Activated CD4-positive, alpha-beta T cell treated with anti-CD3 and anti-CD28 coated beads for 36 hours (primary cell): ENCODE measurements at regions of chr16 and their contacts with region 1.

Region 1: DNA sequence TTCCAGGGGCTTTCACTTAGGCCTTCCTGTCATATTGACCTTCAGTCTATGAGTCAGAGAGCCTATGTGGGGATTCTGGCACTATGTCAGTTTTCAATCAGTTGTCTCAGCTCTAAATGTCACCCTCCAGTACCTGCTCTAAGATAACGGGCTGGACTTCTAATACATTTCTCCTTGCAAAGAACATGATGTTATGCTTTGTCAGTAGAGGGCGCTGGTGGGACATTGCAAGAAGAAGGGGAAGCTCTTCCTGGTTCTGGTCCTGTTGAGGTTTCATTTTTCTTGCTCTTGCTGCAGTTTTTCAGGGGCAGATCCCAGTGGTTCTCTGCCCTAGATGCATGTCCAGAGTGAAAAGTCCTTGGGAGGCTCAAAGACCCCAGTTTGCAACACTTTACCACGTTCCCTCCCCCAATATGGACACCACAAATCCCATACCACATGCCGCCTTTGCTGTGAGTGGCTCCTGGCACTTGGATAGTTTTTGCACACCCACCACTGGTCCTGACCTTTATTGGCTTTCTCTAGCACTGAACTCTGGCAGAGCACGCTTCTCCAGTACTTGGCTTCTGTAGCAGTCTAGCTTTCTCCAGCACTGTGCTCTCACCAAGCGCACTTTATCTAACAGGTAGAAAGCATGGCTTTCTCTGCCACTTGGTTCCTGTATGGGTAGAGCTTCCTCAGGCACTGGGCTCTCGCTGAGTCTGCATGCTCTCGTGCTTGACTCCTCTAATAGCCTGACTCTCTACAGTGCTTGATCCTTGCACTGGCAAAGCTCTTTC is 49.0 kb downstream of the BCL7C start:
- DNase-seq: peak; percentile 89
- ATAC-seq: peak; percentile 88
- H3K4me3 Mint-ChIP-seq: peak overlapping the region; percentile 45
- H3K27ac Mint-ChIP-seq: peak overlapping the region; percentile 58
- H3K4me1 Mint-ChIP-seq: peaks cover 8% of the 10 kb centered on the region
- H3K27me3 Mint-ChIP-seq: no peaks in the 10 kb centered on the region

Region 2: GRCh38 chr16:30378236-30379204 is 466.3 kb before region 1 on chr16:
- CTCF ChIA-PET with region 1: no interaction called
- POLR2A ChIA-PET with region 1: no interaction called
- intact Hi-C with region 1: no loop called
- DNase-seq: peak; percentile 100
- ATAC-seq: peak; percentile 87
- H3K4me3 Mint-ChIP-seq: peak overlapping the region; percentile 99
- H3K27ac Mint-ChIP-seq: peak overlapping the region; percentile 99
- H3K4me1 Mint-ChIP-seq: peaks cover 44% of the 10 kb centered on the region
- H3K27me3 Mint-ChIP-seq: no peaks in the 10 kb centered on the region

Region 3: GRCh38 chr16:30834130-30834740 is 10.6 kb before region 1 on chr16:
- CTCF ChIA-PET with region 1: interaction called, 14 read pairs
- POLR2A ChIA-PET with region 1: no interaction called
- intact Hi-C with region 1: no loop called
- DNase-seq: no peak
- ATAC-seq: no peak
- H3K4me3 Mint-ChIP-seq: no peak overlapping the region
- H3K27ac Mint-ChIP-seq: no peak overlapping the region
- H3K4me1 Mint-ChIP-seq: no peaks in the 10 kb centered on the region
- H3K27me3 Mint-ChIP-seq: no peaks in the 10 kb centered on the region

Region 4: GRCh38 chr16:30874821-30875717 is 30.2 kb after region 1 on chr16:
- CTCF ChIA-PET with region 1: interaction called, 12 read pairs
- POLR2A ChIA-PET with region 1: no interaction called
- intact Hi-C with region 1: loop called in 1 of 2 experiments (anchors 1 kb)
- DNase-seq: peak; percentile 94
- ATAC-seq: peak; percentile 82
- H3K4me3 Mint-ChIP-seq: peak overlapping the region; percentile 87
- H3K27ac Mint-ChIP-seq: peak overlapping the region; percentile 93
- H3K4me1 Mint-ChIP-seq: peaks cover 24% of the 10 kb centered on the region
- H3K27me3 Mint-ChIP-seq: no peaks in the 10 kb centered on the region

Region 5: DNA sequence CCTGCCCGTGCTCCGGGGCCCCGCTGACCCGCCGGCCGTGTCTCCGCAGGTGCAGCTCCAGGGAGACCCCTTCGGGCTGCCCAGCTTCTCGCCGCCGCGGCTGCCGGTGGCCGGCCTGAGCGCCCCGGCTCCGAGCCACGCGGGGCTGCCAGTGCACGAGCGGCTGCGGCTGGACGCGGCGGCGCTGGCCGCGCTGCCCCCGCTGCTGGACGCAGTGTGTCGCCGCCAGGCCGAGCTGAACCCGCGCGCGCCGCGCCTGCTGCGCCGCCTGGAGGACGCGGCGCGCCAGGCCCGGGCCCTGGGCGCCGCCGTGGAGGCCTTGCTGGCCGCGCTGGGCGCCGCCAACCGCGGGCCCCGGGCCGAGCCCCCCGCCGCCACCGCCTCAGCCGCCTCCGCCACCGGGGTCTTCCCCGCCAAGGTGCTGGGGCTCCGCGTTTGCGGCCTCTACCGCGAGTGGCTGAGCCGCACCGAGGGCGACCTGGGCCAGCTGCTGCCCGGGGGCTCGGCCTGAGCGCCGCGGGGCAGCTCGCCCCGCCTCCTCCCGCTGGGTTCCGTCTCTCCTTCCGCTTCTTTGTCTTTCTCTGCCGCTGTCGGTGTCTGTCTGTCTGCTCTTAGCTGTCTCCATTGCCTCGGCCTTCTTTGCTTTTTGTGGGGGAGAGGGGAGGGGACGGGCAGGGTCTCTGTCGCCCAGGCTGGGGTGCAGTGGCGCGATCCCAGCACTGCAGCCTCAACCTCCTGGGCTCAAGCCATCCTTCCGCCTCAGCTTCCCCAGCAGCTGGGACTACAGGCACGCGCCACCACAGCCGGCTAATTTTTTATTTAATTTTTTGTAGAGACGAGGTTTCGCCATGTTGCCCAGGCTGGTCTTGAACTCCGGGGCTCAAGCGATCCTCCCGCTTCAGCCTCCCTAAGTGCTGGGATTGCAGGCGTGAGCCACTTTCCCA is 57.4 kb after region 1 on chr16:
- CTCF ChIA-PET with region 1: interaction called, 85 read pairs
- POLR2A ChIA-PET with region 1: no interaction called
- intact Hi-C with region 1: loop called (anchors 1 to 5 kb)
- DNase-seq: peak; percentile 77
- ATAC-seq: peak; percentile 87
- H3K4me3 Mint-ChIP-seq: peak overlapping the region; percentile 80
- H3K27ac Mint-ChIP-seq: peak overlapping the region; percentile 99
- H3K4me1 Mint-ChIP-seq: peaks cover 25% of the 10 kb centered on the region
- H3K27me3 Mint-ChIP-seq: no peaks in the 10 kb centered on the region

Region 6: DNA sequence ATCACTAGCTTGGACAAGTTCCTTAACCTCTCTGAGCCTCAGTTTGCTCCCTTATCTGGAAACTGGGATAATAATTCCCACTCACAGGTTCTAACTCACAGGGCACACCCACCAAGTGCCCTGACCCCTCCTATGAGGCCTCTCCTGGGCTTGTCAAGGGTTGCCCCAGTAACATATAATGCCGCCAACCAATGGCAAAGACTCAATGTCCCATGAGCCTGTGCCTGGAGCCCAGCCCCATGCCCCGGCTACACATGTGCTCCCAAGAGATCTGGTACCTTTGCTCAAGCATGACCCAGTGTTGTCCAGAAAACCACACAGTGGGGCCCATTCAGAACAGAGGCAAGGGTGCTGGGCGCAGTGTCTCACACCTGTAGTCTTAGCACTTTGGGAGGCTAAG is 70.0 kb after region 1 on chr16:
- CTCF ChIA-PET with region 1: interaction called, 36 read pairs
- POLR2A ChIA-PET with region 1: interaction called, 3 read pairs
- intact Hi-C with region 1: no loop called
- DNase-seq: no peak
- ATAC-seq: no peak
- H3K4me3 Mint-ChIP-seq: no peak overlapping the region
- H3K27ac Mint-ChIP-seq: no peak overlapping the region
- H3K4me1 Mint-ChIP-seq: no peaks in the 10 kb centered on the region
- H3K27me3 Mint-ChIP-seq: no peaks in the 10 kb centered on the region

Region 7: DNA sequence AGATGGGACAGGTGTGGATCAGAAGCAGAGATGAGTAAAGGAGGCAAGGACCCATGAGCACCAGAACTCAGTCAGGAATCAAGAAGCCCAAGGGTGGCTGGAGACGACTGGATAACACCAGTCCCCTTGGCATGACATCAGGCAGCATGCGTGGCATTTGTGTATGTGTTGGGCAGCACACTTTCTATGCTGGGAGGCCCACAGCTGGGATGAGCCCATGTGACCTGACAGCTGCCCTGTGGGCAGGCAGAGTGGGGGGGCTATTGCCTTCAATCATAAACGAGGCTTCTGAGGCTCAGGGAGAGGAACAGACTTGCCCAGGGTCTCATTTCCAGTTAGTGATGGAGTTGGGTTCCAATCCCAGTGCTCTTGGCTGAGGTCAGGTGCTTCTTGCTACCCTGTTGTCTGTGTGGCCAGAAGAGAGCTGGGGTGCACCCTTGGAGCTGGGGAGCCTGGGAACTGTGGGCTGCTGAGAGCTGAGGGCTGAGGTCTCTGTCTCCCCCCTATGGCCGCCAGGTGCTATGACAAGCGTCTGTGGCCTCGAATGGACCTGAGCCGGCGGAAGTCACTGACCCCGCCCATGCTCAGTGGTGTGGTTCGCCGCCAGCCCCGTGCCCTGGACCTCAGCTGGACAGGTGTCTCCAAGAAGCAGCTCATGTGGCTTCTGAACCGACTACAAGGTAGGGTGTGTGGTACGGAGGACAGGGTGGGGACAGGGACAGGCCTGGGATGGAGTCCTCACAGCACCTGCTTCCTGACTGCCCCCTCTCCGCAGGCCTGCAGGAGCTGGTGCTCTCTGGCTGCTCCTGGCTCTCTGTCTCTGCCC is 97.0 kb after region 1 on chr16:
- CTCF ChIA-PET with region 1: interaction called, 34 read pairs
- POLR2A ChIA-PET with region 1: no interaction called
- intact Hi-C with region 1: loop called (anchors 1 kb)
- DNase-seq: peak; percentile 83
- ATAC-seq: peak; percentile 94
- H3K4me3 Mint-ChIP-seq: peak overlapping the region; percentile 35
- H3K27ac Mint-ChIP-seq: peak overlapping the region; percentile 78
- H3K4me1 Mint-ChIP-seq: peaks cover 19% of the 10 kb centered on the region
- H3K27me3 Mint-ChIP-seq: no peaks in the 10 kb centered on the region